Body of pancreas (tissue), 4 donors: ENCODE measurements at regions of chr9 and their contacts with region 1.

Region 1: DNA sequence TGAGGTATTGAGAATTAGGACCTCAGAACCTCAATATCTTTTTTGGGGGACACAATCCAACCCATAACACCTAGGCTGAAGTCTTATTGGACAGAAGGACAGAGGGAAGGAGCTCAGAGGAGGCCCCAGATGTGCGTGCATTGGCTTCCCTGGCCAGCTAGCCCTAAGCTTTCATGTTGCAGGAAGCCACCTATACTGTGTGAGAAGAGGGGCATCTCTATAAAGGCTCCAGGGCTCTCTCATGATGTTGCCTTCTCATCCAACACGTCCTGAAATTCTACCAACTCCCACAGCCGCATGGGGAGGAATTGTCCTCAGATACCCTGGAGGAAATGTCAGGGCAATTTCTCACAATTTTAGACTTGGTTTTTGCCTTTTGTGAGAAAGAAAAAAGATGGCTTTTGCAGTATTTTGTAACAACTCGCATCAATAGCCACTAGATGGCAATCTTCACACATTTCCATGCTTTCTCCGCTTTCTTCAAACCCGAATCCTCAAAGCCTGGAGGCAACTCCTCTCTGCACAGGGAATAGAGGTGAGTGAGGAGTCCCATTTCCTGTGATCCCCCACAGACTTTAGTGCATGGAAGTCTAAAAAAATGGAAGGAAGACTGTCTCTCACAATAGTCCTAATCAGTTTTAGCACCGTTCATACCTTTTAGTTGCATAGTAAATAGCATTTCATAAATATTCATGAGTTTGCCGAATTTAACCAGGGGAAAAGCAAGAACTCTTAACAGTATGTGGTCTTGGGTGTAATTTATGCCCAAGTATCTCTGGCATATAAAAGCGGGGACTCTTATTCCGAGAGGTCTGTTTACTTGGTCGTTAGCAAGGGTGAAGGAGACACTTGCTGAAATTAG is 7.4 kb upstream of the PPP3R2 start:
- DNase-seq: peak in 3 of 4 donors; percentile 18 to 27 (median 22)
- ATAC-seq: peak; percentile 67
- H3K4me3 ChIP-seq: no peak overlapping the region
- H3K27ac ChIP-seq: no peak overlapping the region
- H3K4me1 ChIP-seq: no peaks in the 10 kb centered on the region
- H3K27me3 ChIP-seq: no peaks in the 10 kb centered on the region
- CTCF ChIP-seq: peak; percentile 47 to 77 (median 58)
- POLR2A ChIP-seq: no peak

Region 2: GRCh38 chr9:101727612-101728524 is 125.7 kb after region 1 on chr9:
- intact Hi-C with region 1: loop called (anchors 10 kb)
- DNase-seq: peak in 3 of 4 donors; percentile 10 to 33 (median 19)
- ATAC-seq: no peak
- H3K4me3 ChIP-seq: no peak overlapping the region
- H3K27ac ChIP-seq: no peak overlapping the region
- H3K4me1 ChIP-seq: no peaks in the 10 kb centered on the region
- H3K27me3 ChIP-seq: no peaks in the 10 kb centered on the region
- CTCF ChIP-seq: peak; percentile 9 to 55 (median 44)
- POLR2A ChIP-seq: no peak

Region 3: DNA sequence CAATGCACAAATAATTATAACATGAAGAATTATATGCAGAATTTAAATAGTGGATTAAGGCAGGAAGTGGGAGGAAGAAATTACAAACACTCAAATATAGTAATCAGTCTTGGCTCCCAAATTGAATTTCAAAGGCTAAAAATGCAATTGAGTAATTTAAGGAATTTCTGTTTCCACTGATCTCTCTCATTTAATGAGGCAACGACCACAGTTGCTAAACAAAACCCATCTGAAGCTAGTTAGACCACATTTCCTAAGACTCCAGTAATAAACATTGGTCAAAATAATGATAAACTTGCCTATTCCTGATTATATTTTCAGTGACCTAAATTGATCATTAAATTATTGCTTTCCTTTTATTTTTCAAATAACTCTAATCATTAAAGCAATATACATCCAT is 310.6 kb after region 1 on chr9:
- intact Hi-C with region 1: no loop called
- DNase-seq: no peak
- ATAC-seq: no peak
- H3K4me3 ChIP-seq: no peak overlapping the region
- H3K27ac ChIP-seq: no peak overlapping the region
- H3K4me1 ChIP-seq: no peaks in the 10 kb centered on the region
- H3K27me3 ChIP-seq: no peaks in the 10 kb centered on the region
- CTCF ChIP-seq: no peak
- POLR2A ChIP-seq: no peak